Left lung (tissue), 14 donors: ENCODE measurements at regions of chr7 and their contacts with region 1.

Region 1: DNA sequence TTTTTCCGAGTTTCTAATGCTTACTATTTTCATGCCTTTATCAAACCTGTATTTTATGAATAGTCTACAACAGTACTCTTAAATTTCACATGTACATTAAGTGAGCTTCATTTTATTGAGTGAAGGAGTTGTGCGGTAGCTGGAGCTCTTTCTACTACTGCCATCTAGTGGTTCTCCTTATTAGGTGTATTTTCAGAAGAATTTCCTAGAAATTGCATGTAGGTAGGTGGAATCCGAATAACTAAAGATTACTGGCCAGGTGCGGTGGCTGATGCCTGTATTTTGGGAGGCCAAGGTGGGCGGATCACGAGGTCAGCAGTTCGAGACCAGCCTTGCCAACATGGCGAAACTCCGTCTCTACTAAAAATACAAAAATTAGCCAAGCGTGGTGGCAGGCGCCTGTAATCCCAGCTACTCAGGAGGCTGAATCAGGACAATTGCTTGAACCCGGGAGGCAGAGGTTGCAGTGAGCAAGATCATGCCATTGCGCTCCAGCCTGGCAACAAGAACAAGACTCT is 38.3 kb downstream of the LRRC72 start:
- DNase-seq: peak in 2 of 4 donors; percentile 37 to 62
- ATAC-seq: peak; percentile 87
- H3K4me3 ChIP-seq: no peak overlapping the region
- H3K27ac ChIP-seq: no peak overlapping the region
- H3K4me1 ChIP-seq: no peaks in the 10 kb centered on the region
- H3K27me3 ChIP-seq: no peaks in the 10 kb centered on the region
- CTCF ChIP-seq: peak; percentile 59 to 65

Region 2: GRCh38 chr7:16071246-16071857 is 493.6 kb before region 1 on chr7:
- intact Hi-C with region 1: loop called in 1 of 2 experiments (anchors 10 kb)
- DNase-seq: peak in 2 of 4 donors; percentile 70 to 75
- ATAC-seq: peak; percentile 70
- H3K4me3 ChIP-seq: no peak overlapping the region
- H3K27ac ChIP-seq: no peak overlapping the region
- H3K4me1 ChIP-seq: peaks cover 0 to 7% of the 10 kb centered on the region in 2 donors
- H3K27me3 ChIP-seq: no peaks in the 10 kb centered on the region
- CTCF ChIP-seq: peak; percentile 65 to 71

Region 3: GRCh38 chr7:16409777-16410176 is 155.2 kb before region 1 on chr7:
- intact Hi-C with region 1: no loop called
- DNase-seq: no peak
- ATAC-seq: peak; percentile 25
- H3K4me3 ChIP-seq: no peak overlapping the region
- H3K27ac ChIP-seq: no peak overlapping the region
- H3K4me1 ChIP-seq: no peaks in the 10 kb centered on the region
- H3K27me3 ChIP-seq: no peaks in the 10 kb centered on the region
- CTCF ChIP-seq: no peak